Activated B cell treated with CpG ODN at 0.5 μM for 24 hours (primary cell): ENCODE measurements at regions of chr4 and their contacts with region 1.

Region 1: DNA sequence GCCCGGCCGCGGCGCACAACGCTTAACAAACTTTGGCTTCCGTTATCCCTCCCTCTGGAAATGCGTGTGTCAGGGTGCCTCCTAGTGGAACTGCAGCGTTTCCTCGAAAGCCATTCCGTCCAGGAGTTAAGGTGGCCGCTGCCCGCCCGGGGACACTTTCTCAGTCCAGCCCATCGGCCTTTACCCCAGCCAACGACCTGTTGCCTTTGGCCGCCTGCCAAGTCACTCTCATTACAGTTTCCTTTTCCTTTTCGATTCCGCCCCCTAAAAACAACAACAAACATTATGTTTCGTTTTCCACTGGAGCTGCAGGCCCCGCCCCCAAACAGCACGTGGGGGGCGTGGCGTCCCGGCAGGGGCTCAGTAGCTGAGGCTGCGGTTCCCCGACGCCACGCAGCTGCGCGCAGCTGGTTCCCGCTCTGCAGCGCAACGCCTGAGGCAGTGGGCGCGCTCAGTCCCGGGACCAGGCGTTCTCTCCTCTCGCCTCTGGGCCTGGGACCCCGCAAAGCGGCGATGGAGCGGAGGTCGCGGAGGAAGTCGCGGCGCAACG is at the start of gene HERC5:
- DNase-seq: peak; percentile 84
- ATAC-seq: peak; percentile 96
- H3K4me3 Mint-ChIP-seq: peak within 1 kb of the TSS; percentile 100
- H3K27ac Mint-ChIP-seq: peak within 1 kb of the TSS; percentile 99
- H3K4me1 Mint-ChIP-seq: peaks cover 17% of the 10 kb centered on the region
- H3K27me3 Mint-ChIP-seq: no peaks in the 10 kb centered on the region
- CTCF ChIP-seq: no peak
- total RNA-seq, gene HERC5: 4.2 and 4.8 TPM in 2 replicates

Region 2: DNA sequence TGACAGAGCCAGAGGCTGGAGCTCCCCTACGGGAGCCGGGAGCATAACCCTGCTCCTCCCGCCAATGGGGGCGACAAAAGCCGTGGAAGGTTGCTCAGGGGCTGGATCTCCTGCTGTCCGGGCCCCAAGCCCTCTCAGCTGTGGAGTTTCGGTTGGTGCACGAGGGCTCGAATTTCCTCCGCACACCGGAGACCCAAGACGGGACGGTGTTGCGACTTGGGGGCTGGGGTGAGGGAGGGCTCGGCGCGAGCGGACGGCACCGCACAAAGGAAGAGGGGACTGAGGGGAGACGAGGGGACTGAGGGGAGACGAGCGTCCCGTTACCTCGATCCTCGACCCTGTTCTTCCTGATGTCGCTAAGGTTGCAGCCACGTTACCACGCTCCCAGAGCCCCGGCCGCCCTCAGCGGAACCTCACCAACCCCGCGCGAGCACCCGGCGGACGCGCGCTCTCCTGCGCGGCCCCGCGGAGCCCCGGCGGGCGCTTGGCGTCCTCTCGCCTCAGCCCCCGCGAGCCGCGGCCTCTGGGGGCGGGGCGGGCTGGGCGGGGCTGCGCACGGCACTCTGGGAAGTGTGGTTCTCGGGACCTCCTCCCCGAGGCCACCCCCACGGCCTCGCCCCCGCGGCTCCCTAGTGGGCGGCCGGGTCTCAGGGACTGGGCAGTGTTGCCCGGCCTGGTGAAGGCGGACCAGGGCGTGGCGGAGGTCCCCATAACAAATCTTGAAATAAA is 1236.6 kb before region 1 on chr4 and contains the start of gene KLHL8:
- CTCF ChIA-PET with region 1: no interaction called
- POLR2A ChIA-PET with region 1: no interaction called
- intact Hi-C with region 1: loop called (anchors 2 kb)
- DNase-seq: peak; percentile 93
- ATAC-seq: peak; percentile 92
- H3K4me3 Mint-ChIP-seq: peak within 1 kb of the TSS; percentile 95
- H3K27ac Mint-ChIP-seq: peak within 1 kb of the TSS; percentile 93
- H3K4me1 Mint-ChIP-seq: peaks cover 17% of the 10 kb centered on the region
- H3K27me3 Mint-ChIP-seq: no peaks in the 10 kb centered on the region
- CTCF ChIP-seq: no peak
- total RNA-seq, gene KLHL8: 10.5 and 12.6 TPM in 2 replicates

Region 3: DNA sequence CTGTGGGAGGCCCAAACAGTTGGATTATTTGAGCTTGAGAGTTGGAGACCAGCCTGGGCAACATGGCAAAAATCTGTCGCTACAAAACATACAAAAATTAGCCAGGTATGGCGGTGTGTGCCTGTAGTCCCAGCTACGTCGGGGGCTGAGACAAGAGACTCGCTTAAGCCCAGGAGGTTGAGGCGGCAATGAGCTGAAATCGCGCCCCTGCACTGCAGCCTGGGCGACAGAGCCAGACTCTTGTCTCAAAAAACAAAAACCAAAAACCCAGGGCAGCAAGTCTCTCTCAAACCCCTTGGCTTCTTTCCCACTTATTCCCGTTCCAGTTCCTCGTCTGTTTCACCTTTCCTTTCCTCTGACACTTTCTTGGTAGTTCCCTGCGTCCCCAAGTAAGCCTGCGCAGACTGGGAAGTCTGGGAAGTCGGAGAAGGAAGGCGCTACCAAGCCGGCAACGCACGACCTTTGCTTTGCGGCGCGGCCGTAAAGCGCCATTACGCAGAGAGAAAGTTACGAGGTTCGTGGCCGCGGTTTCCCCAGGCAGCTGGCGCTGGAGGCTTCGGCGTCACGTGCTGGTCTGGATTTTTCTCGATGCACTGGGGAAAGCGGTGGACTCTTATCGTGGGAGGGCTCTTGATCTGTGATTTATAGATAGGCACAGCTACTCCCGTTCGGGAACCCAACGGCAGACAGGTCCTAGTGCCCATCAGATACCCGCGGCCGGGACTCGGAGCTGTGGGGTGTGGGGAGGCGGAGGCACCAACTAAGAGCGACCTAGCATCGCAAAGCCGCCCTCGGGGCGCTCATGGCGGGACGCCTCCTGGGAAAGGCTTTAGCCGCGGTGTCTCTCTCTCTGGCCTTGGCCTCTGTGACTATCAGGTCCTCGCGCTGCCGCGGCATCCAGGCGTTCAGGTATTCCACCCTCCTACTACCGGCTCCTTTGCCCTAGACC is 1034.5 kb before region 1 on chr4 and contains the start of gene NUDT9:
- CTCF ChIA-PET with region 1: no interaction called
- POLR2A ChIA-PET with region 1: interaction called, 3 read pairs
- intact Hi-C with region 1: loop called (anchors 2 kb)
- DNase-seq: peak; percentile 80
- ATAC-seq: peak; percentile 86
- H3K4me3 Mint-ChIP-seq: peak within 1 kb of the TSS; percentile 100
- H3K27ac Mint-ChIP-seq: peak within 1 kb of the TSS; percentile 99
- H3K4me1 Mint-ChIP-seq: peaks cover 40% of the 10 kb centered on the region
- H3K27me3 Mint-ChIP-seq: no peaks in the 10 kb centered on the region
- CTCF ChIP-seq: no peak
- total RNA-seq, gene NUDT9: 18.5 and 21.1 TPM in 2 replicates

Region 4: GRCh38 chr4:88217920-88218319 is 238.9 kb before region 1 on chr4:
- CTCF ChIA-PET with region 1: interaction called, 14 read pairs
- POLR2A ChIA-PET with region 1: no interaction called
- intact Hi-C with region 1: loop called (anchors 1 kb)
- DNase-seq: no peak
- ATAC-seq: no peak
- H3K4me3 Mint-ChIP-seq: no peak overlapping the region
- H3K27ac Mint-ChIP-seq: no peak overlapping the region
- H3K4me1 Mint-ChIP-seq: peaks cover 3% of the 10 kb centered on the region
- H3K27me3 Mint-ChIP-seq: peaks cover 2% of the 10 kb centered on the region
- CTCF ChIP-seq: no peak

Region 5: DNA sequence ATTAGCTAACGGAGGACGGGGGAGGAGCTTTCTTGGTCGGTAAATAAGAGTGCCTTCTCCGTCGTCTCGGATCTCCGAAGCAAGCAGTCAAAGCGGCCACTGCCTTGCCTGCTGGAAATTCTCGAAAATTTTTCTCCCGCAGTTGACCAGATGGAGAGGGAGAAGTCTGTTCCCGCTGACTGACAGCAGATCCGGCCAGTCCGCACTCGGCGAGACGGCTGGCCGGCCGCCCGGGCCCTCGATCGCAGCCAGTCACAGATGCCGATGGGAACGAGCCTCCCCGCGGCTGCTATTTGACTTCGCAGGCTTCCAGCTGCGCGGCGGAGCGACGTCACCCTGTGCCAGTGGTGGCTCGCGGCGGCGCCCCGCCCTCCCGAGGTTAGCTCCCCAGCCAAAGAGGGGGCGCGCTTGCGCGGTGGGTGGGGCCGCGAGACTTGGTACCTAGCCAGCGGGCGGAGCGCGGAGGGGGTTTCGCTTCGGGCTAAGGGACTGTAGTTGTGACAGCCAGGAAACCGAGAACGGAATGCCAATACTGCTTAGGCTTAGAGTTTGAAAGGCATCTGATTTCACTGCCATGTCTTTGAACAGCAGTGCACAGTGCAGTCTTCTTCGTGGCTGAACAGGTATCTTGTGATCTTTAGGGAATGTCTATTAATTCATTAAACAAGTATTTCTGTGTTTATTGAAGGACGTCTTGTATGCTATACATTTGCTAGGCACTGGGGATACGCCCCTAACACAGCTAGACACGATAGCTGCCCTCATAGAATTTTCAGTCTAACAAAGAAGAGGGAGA is 172.2 kb before region 1 on chr4 and contains the start of gene PPM1K:
- CTCF ChIA-PET with region 1: interaction called, 6 read pairs
- POLR2A ChIA-PET with region 1: interaction called, 48 read pairs
- intact Hi-C with region 1: loop called (anchors 1 kb)
- DNase-seq: peak; percentile 99
- ATAC-seq: peak; percentile 81
- H3K4me3 Mint-ChIP-seq: peak within 1 kb of the TSS; percentile 98
- H3K27ac Mint-ChIP-seq: peak within 1 kb of the TSS; percentile 99
- H3K4me1 Mint-ChIP-seq: peaks cover 54% of the 10 kb centered on the region
- H3K27me3 Mint-ChIP-seq: no peaks in the 10 kb centered on the region
- CTCF ChIP-seq: no peak
- total RNA-seq, gene PPM1K: 72.1 and 76.6 TPM in 2 replicates

Region 6: GRCh38 chr4:88378691-88379559 is 77.9 kb before region 1 on chr4 and contains the start of gene HERC6:
- CTCF ChIA-PET with region 1: interaction called, 12 read pairs
- POLR2A ChIA-PET with region 1: interaction called, 11 read pairs
- intact Hi-C with region 1: loop called (anchors 1 kb)
- DNase-seq: peak; percentile 64
- ATAC-seq: peak; percentile 80
- H3K4me3 Mint-ChIP-seq: peak within 1 kb of the TSS; percentile 92
- H3K27ac Mint-ChIP-seq: peak within 1 kb of the TSS; percentile 91
- H3K4me1 Mint-ChIP-seq: peaks cover 31% of the 10 kb centered on the region
- H3K27me3 Mint-ChIP-seq: no peaks in the 10 kb centered on the region
- CTCF ChIP-seq: no peak
- total RNA-seq, gene HERC6: 11.4 and 12.2 TPM in 2 replicates

Region 7: DNA sequence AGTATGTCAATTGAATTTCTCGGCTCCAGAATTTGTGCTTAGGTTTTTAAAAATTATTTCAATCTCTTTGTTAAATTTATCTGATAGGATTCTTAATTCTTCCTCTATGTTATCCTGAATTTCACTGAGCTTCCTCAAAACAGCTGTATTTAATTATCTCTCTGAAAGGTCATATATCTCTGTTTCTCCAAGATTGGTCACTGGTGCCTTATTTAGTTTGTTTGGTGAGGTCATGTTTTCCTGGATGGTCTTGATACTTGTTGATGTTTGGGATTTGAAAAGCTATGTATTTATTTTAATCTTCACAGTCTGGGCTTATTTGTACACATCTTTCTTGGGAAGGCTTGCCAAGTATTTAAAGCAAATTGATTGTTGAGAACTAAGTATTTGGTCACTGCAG is 110.8 kb after region 1 on chr4:
- CTCF ChIA-PET with region 1: no interaction called
- POLR2A ChIA-PET with region 1: no interaction called
- intact Hi-C with region 1: no loop called
- DNase-seq: no peak
- ATAC-seq: no peak
- H3K4me3 Mint-ChIP-seq: no peak overlapping the region
- H3K27ac Mint-ChIP-seq: no peak overlapping the region
- H3K4me1 Mint-ChIP-seq: peaks cover 2% of the 10 kb centered on the region
- H3K27me3 Mint-ChIP-seq: peaks cover 27% of the 10 kb centered on the region
- CTCF ChIP-seq: no peak